T-cell (primary cell): ENCODE measurements at regions of chr9 and their contacts with region 1.

Region 1: GRCh38 chr9:97696803-97697601 is at the start of gene XPA:
- DNase-seq: peak; percentile 92 to 98 (median 95)
- ATAC-seq: peak; percentile 92 to 96 (median 93)
- H3K4me3 ChIP-seq: peak within 1 kb of the TSS; percentile 72 to 73
- H3K4me3 Mint-ChIP-seq: peak within 1 kb of the TSS; percentile 87 to 91 (median 90)
- H3K27ac ChIP-seq: peak within 1 kb of the TSS; percentile 84
- H3K27ac Mint-ChIP-seq: peak within 1 kb of the TSS; percentile 97 to 98
- H3K4me1 ChIP-seq: peaks cover 14 to 31% of the 10 kb centered on the region in 2 experiments
- H3K4me1 Mint-ChIP-seq: peaks cover 55 to 64% (median 58%) of the 10 kb centered on the region in 3 donors
- H3K27me3 ChIP-seq: peaks cover 0 to 5% of the 10 kb centered on the region in 2 experiments
- H3K27me3 Mint-ChIP-seq: peaks cover 0 to 7% of the 10 kb centered on the region in 2 donors
- total RNA-seq, gene XPA: 21.7 to 24.5 (median 23.3) TPM

Region 2: GRCh38 chr9:97632985-97633858 is 63.8 kb before region 1 on chr9 and contains the starts of genes NCBP1 and TSTD2:
- CTCF ChIA-PET with region 1: interaction called in 1 of 2 experiments, 3 read pairs
- POLR2A ChIA-PET with region 1: interaction called in 1 of 2 experiments, 19 read pairs
- DNase-seq: peak; percentile 89 to 98 (median 95)
- ATAC-seq: peak; percentile 86 to 91 (median 90)
- H3K4me3 ChIP-seq: peak within 1 kb of the TSS; percentile 59 to 75
- H3K4me3 Mint-ChIP-seq: peak within 1 kb of the TSS; percentile 97 to 99 (median 98)
- H3K27ac ChIP-seq: peak within 1 kb of the TSS; percentile 88
- H3K27ac Mint-ChIP-seq: peak within 1 kb of the TSS; percentile 97 to 100
- H3K4me1 ChIP-seq: peaks cover 21 to 27% of the 10 kb centered on the region in 2 experiments
- H3K4me1 Mint-ChIP-seq: peaks cover 66 to 68% (median 68%) of the 10 kb centered on the region in 3 donors
- H3K27me3 ChIP-seq: no peaks in the 10 kb centered on the region
- H3K27me3 Mint-ChIP-seq: no peaks in the 10 kb centered on the region
- total RNA-seq, gene NCBP1: 31.9 to 38.7 (median 33.8) TPM
- total RNA-seq, gene TSTD2: 15.4 to 24.0 (median 17.9) TPM

Region 3: DNA sequence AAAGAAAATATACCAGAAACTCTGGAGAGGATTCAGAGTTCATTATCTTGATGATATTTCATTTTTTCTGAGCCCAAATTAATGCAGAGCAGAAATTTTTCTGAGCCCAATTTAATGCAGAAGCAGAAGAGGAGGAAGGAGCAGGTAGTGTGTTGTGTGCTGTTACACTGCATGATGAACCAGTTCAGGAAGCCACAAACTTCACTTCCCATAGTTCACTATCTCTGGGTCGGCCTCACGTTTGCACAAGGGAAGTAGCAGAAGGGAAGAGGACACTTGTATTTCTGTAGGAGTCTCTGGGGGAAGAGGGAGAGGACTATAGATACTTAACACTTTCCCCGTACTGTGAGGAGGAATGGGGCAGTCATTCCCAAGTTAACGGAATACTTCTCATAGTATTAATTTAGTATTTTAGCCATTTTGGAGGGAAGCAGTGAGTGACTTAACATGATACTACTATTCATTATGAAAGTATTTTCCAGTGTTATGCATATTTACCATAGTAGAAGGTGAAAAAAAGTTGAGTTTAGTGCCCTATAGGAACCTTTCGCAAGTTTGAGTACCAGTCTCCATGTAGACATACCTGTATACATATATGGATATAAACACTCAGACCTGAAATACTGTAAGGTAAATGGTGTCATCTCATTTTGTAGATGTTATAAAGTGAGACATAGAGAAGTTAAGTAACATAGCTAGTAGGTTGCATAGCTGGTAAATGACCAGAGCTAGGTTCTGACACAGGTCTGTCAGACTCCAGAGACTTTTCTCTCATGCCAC is 29.9 kb before region 1 on chr9:
- CTCF ChIA-PET with region 1: no interaction called
- POLR2A ChIA-PET with region 1: no interaction called
- DNase-seq: no peak
- ATAC-seq: no peak
- H3K4me3 ChIP-seq: no peak overlapping the region
- H3K4me3 Mint-ChIP-seq: no peak overlapping the region
- H3K27ac ChIP-seq: no peak overlapping the region
- H3K27ac Mint-ChIP-seq: peak overlapping the region; percentile 3 to 22
- H3K4me1 ChIP-seq: no peaks in the 10 kb centered on the region
- H3K4me1 Mint-ChIP-seq: peaks cover 10 to 15% (median 12%) of the 10 kb centered on the region in 3 donors
- H3K27me3 ChIP-seq: no peaks in the 10 kb centered on the region
- H3K27me3 Mint-ChIP-seq: no peaks in the 10 kb centered on the region

Region 4: DNA sequence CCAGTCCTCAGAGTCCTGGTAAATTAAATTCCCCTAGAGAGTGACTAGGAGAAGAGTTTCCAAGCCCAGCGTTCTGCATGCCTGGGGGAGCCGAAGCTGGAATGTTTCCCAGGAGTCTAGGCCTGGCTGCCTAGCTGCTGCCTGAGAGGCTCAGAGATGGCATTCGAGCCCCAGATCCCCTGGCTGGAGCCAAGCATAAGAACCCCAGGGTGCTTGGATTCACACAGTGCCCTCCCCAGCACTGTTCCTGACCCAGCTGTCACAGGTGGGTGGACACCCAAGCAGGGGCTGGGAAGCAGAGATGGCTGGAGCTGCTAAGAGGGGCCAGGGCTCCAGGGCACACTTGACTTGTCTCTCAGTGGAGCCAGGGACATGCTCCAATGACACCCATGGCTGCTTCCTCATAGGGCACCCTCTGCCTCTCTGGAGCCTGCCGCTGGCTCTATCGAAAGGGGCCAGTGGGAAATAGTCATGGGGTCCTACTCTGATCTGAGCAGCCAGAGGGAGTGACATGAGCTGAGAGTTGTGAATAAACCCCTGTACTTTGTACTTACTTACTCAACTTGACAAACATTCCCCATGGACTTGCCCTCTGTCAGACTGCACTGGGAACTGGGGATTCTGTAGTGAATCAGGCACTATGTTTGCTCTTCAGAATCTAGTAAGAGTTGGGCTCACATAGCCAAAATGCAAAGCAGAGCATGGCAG is 62.7 kb after region 1 on chr9:
- CTCF ChIA-PET with region 1: no interaction called
- POLR2A ChIA-PET with region 1: no interaction called
- DNase-seq: no peak
- ATAC-seq: no peak
- H3K4me3 ChIP-seq: no peak overlapping the region
- H3K4me3 Mint-ChIP-seq: no peak overlapping the region
- H3K27ac ChIP-seq: no peak overlapping the region
- H3K27ac Mint-ChIP-seq: no peak overlapping the region
- H3K4me1 ChIP-seq: no peaks in the 10 kb centered on the region
- H3K4me1 Mint-ChIP-seq: no peaks in the 10 kb centered on the region
- H3K27me3 ChIP-seq: peaks cover 2 to 36% of the 10 kb centered on the region in 2 experiments
- H3K27me3 Mint-ChIP-seq: peaks cover 41 to 42% of the 10 kb centered on the region in 2 donors